ENCODE measurements at regions of chr10 and their contacts with region 1.

Region 1: DNA sequence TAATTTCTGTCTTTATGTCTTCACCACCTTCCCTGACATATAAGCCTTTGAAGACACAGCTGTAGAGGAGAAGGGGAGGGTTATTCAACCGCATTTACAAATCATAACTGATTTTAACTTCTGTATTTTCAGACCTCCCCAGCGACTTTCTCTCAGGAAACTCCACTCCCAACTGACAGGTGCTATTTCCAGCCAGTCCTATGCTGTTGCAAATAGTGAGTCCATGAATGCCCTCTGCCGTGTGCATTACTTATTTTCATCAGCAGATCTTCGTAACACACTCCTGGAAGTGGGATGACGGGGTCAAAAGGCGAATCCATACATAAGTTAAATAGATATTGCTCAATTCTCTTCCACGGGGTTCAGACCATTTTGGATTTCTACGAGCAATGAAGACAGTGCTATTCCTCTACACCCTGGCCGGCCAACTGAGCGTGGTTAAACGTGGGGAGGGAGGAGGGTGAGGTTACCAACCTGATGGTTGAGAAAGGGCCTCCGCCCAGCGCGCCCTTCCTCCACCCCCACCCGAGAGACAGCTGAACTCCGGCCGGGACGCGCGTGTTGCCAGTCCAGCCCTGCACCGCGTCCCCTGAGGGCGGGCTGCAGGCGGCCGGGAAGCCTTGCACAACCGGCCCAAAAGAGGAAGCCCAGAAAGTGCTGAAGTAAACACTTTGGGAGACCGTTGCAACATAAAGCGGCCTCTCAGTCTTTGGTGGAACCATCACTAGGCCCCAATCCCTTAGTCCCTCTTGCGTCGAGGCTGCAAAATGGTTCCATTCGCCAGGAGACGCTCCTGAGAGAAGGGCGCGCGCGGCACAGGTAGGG is at the start of gene APBB1IP:
- DNase-seq: peak; percentile 28 to 79 (median 57)
- ATAC-seq: peak; percentile 43
- H3K4me3 ChIP-seq: peak within 1 kb of the TSS; percentile 85 to 94
- H3K4me3 Mint-ChIP-seq: peak within 1 kb of the TSS; percentile 93
- H3K27ac ChIP-seq: peak within 1 kb of the TSS; percentile 83 to 90
- H3K27ac Mint-ChIP-seq: peak within 1 kb of the TSS; percentile 98
- H3K4me1 ChIP-seq: peaks cover 40% of the 10 kb centered on the region
- H3K4me1 Mint-ChIP-seq: peaks cover 52% of the 10 kb centered on the region
- H3K27me3 ChIP-seq: no peaks in the 10 kb centered on the region
- H3K27me3 Mint-ChIP-seq: no peaks in the 10 kb centered on the region
- CTCF ChIP-seq: no peak
- total RNA-seq, gene APBB1IP: 36.4 to 36.8 TPM

Region 2: GRCh38 chr10:26448706-26449435 is 11.0 kb after region 1 on chr10:
- CTCF ChIA-PET with region 1: interaction called, 4 read pairs
- POLR2A ChIA-PET with region 1: interaction called, 8 read pairs
- intact Hi-C with region 1: loop called in 1 of 2 experiments (anchors 1 kb)
- DNase-seq: peak; percentile 55 to 95 (median 76)
- ATAC-seq: peak; percentile 72
- H3K4me3 ChIP-seq: peak overlapping the region; percentile 23 to 31
- H3K4me3 Mint-ChIP-seq: peak overlapping the region; percentile 81
- H3K27ac ChIP-seq: peak overlapping the region; percentile 82 to 92
- H3K27ac Mint-ChIP-seq: peak overlapping the region; percentile 99
- H3K4me1 ChIP-seq: peaks cover 82% of the 10 kb centered on the region
- H3K4me1 Mint-ChIP-seq: peaks cover 93% of the 10 kb centered on the region
- H3K27me3 ChIP-seq: no peaks in the 10 kb centered on the region
- H3K27me3 Mint-ChIP-seq: no peaks in the 10 kb centered on the region
- CTCF ChIP-seq: no peak

Region 3: DNA sequence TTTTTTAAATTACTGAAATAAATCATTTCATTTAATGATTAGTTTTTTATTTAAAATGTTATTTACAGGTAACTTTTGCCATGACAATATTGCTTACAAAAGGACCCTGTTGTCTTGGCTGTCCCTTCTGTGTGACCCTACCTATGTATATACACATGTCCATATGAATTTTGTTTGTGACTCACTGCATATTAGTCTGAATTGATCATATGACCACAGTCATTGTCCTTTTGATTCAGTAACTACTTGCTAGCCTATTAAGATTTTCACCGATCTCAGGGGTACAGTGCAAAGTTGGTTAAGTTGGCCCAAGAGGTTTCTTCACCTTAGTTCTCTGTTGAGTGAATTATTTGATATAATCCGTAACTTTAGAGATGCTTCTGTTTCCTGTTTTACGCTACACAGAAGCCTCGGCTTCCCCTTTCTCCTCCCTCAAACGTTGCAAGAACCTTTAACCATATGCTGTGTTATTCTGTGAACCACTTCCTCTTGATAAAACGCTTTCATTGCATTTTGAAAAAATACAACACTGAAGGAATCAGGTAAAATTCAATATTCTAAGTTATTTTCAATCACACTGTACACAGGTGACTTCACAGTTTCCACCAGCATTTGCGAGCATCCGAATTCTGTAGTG is 44.2 kb after region 1 on chr10:
- CTCF ChIA-PET with region 1: interaction called, 4 read pairs
- POLR2A ChIA-PET with region 1: interaction called, 10 read pairs
- intact Hi-C with region 1: loop called in 1 of 2 experiments (anchors 1 kb)
- DNase-seq: peak in 7 of 9 experiments; percentile 26 to 87 (median 69)
- ATAC-seq: peak; percentile 68
- H3K4me3 ChIP-seq: peak overlapping the region in 1 of 2 experiments; percentile 18
- H3K4me3 Mint-ChIP-seq: peak overlapping the region; percentile 42
- H3K27ac ChIP-seq: peak overlapping the region; percentile 58 to 83
- H3K27ac Mint-ChIP-seq: peak overlapping the region; percentile 88
- H3K4me1 ChIP-seq: peaks cover 84% of the 10 kb centered on the region
- H3K4me1 Mint-ChIP-seq: peaks cover 77% of the 10 kb centered on the region
- H3K27me3 ChIP-seq: no peaks in the 10 kb centered on the region
- H3K27me3 Mint-ChIP-seq: no peaks in the 10 kb centered on the region
- CTCF ChIP-seq: no peak

Region 4: DNA sequence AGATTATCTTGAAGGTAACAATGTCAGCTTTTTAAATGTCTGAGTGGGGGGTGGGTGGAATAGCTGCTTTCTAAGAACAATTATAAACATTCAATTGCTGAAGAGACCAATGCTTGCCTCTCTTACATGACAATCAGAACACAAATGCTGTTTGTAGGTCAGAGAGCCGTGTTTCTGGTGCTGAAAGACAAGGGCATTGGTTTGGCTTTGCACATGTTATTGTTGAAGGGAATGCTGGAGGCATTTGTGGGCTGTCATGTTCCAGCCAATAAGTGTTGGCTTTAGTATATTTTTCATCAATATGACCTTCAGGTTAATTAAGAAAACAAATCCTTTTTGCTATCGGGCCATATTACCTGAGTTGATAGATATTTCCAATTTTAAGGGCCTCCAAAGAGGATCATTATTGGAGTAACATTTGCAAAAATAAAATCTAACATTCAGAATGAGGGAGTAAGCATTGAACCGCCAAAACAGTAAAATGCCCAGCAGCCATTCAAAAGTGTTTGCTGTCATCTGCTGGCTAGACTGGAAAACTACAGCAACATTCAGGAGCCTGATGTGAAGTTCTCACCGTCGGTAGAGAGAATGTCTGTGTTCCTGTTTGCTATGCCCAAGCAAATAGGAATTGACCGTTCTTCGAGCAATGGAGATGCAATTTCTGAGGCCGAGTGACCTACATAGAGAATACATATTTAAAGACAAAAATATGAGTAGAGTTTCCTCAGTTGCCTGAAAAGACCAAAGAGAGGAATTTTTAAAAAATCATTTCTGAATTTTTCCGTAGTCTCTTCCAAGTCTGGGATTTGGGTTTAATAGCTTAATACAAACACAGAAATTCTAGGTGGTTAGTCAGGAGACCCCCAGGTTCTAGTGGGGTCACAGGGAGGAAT is 119.1 kb after region 1 on chr10:
- CTCF ChIA-PET with region 1: interaction called, 3 read pairs
- POLR2A ChIA-PET with region 1: no interaction called
- intact Hi-C with region 1: loop called in 1 of 2 experiments (anchors 5 kb)
- DNase-seq: peak in 8 of 9 experiments; percentile 5 to 70 (median 34)
- ATAC-seq: peak; percentile 64
- H3K4me3 ChIP-seq: no peak overlapping the region
- H3K4me3 Mint-ChIP-seq: no peak overlapping the region
- H3K27ac ChIP-seq: no peak overlapping the region
- H3K27ac Mint-ChIP-seq: peak overlapping the region; percentile 91
- H3K4me1 ChIP-seq: no peaks in the 10 kb centered on the region
- H3K4me1 Mint-ChIP-seq: peaks cover 15% of the 10 kb centered on the region
- H3K27me3 ChIP-seq: no peaks in the 10 kb centered on the region
- H3K27me3 Mint-ChIP-seq: no peaks in the 10 kb centered on the region
- CTCF ChIP-seq: peak; percentile 99

Region 5: DNA sequence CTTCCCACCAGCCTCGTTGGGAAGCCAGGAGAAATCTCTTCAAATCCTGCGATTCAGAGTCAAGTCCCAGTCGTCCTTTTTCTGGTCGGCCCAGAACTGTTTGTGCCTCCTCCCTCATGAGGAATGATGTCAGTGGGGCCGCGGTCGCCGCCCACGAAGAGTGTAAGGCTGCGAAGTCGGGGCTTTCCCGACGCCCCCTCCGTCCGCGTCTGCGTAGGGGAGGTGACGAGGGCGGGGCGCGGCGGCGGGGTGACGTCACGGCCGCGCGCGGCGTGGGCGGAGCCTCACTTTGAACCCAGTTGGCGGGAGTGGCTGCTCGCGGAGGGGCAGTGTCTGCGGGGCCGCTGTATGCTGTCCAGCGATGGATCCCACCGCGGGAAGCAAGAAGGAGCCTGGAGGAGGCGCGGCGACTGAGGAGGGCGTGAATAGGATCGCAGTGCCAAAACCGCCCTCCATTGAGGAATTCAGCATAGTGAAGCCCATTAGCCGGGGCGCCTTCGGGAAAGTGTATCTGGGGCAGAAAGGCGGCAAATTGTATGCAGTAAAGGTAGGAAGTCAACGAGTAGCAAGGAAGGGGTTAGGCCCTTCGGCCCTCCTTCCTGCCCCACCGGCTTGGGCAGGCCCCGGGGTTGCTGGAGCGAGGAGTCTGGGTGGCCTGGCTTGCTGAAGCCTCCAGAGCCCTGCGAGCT is 717.4 kb after region 1 on chr10 and contains the start of gene MASTL:
- CTCF ChIA-PET with region 1: no interaction called
- POLR2A ChIA-PET with region 1: no interaction called
- intact Hi-C with region 1: loop called in 1 of 2 experiments (anchors 5 kb)
- DNase-seq: peak; percentile 90 to 98 (median 93)
- ATAC-seq: peak; percentile 82
- H3K4me3 ChIP-seq: peak within 1 kb of the TSS; percentile 84 to 98
- H3K4me3 Mint-ChIP-seq: peak within 1 kb of the TSS; percentile 99
- H3K27ac ChIP-seq: peak within 1 kb of the TSS; percentile 100
- H3K27ac Mint-ChIP-seq: peak within 1 kb of the TSS; percentile 100
- H3K4me1 ChIP-seq: peaks cover 27% of the 10 kb centered on the region
- H3K4me1 Mint-ChIP-seq: peaks cover 49% of the 10 kb centered on the region
- H3K27me3 ChIP-seq: no peaks in the 10 kb centered on the region
- H3K27me3 Mint-ChIP-seq: no peaks in the 10 kb centered on the region
- CTCF ChIP-seq: no peak
- total RNA-seq, gene MASTL: 33.4 to 33.6 TPM